ENCODE measurements at regions of chr1 and their contacts with region 1.

Region 1: GRCh38 chr1:53889304-53890298 is at the start of gene YIPF1:
- DNase-seq: peak; percentile 87
- ATAC-seq: peak; percentile 99
- H3K4me3 ChIP-seq: peak within 1 kb of the TSS; percentile 76 to 95 (median 83)
- H3K4me3 Mint-ChIP-seq: peak within 1 kb of the TSS; percentile 96
- H3K27ac ChIP-seq: peak within 1 kb of the TSS; percentile 14 to 71
- H3K27ac Mint-ChIP-seq: peak within 1 kb of the TSS; percentile 79
- H3K4me1 ChIP-seq: peaks cover 19 to 27% of the 10 kb centered on the region in 2 donors
- H3K4me1 Mint-ChIP-seq: peaks cover 44% of the 10 kb centered on the region
- H3K27me3 ChIP-seq: no peaks in the 10 kb centered on the region
- H3K27me3 Mint-ChIP-seq: peaks cover 1% of the 10 kb centered on the region
- CTCF ChIP-seq: no peak
- total RNA-seq, gene YIPF1: 13.9 and 19.3 TPM in 2 replicates

Region 2: GRCh38 chr1:52726265-52727113 is 1163.1 kb before region 1 on chr1 and contains the start of gene ZYG11B:
- CTCF ChIA-PET with region 1: no interaction called
- POLR2A ChIA-PET with region 1: no interaction called
- intact Hi-C with region 1: loop called (anchors 5 kb)
- DNase-seq: peak; percentile 95
- ATAC-seq: peak; percentile 95
- H3K4me3 ChIP-seq: peak within 1 kb of the TSS; percentile 56 to 92 (median 76)
- H3K4me3 Mint-ChIP-seq: peak within 1 kb of the TSS; percentile 95
- H3K27ac ChIP-seq: peak within 1 kb of the TSS in 1 of 2 donors; percentile 66
- H3K27ac Mint-ChIP-seq: peak within 1 kb of the TSS; percentile 88
- H3K4me1 ChIP-seq: peaks cover 8 to 12% of the 10 kb centered on the region in 2 donors
- H3K4me1 Mint-ChIP-seq: peaks cover 35% of the 10 kb centered on the region
- H3K27me3 ChIP-seq: no peaks in the 10 kb centered on the region
- H3K27me3 Mint-ChIP-seq: peaks cover 4% of the 10 kb centered on the region
- CTCF ChIP-seq: no peak
- total RNA-seq, gene ZYG11B: 22.3 and 22.7 TPM in 2 replicates

Region 3: GRCh38 chr1:53837924-53838652 is 51.5 kb before region 1 on chr1 and contains the start of gene NDC1:
- CTCF ChIA-PET with region 1: no interaction called
- POLR2A ChIA-PET with region 1: no interaction called
- intact Hi-C with region 1: loop called (anchors 1 kb)
- DNase-seq: peak; percentile 96
- ATAC-seq: peak; percentile 90
- H3K4me3 ChIP-seq: peak within 1 kb of the TSS; percentile 66 to 95 (median 90)
- H3K4me3 Mint-ChIP-seq: peak within 1 kb of the TSS; percentile 100
- H3K27ac ChIP-seq: peak within 1 kb of the TSS; percentile 91 to 95
- H3K27ac Mint-ChIP-seq: peak within 1 kb of the TSS; percentile 99
- H3K4me1 ChIP-seq: peaks cover 11 to 14% of the 10 kb centered on the region in 2 donors
- H3K4me1 Mint-ChIP-seq: peaks cover 35% of the 10 kb centered on the region
- H3K27me3 ChIP-seq: no peaks in the 10 kb centered on the region
- H3K27me3 Mint-ChIP-seq: no peaks in the 10 kb centered on the region
- CTCF ChIP-seq: no peak
- total RNA-seq, gene NDC1: 12.0 and 15.7 TPM in 2 replicates

Region 4: DNA sequence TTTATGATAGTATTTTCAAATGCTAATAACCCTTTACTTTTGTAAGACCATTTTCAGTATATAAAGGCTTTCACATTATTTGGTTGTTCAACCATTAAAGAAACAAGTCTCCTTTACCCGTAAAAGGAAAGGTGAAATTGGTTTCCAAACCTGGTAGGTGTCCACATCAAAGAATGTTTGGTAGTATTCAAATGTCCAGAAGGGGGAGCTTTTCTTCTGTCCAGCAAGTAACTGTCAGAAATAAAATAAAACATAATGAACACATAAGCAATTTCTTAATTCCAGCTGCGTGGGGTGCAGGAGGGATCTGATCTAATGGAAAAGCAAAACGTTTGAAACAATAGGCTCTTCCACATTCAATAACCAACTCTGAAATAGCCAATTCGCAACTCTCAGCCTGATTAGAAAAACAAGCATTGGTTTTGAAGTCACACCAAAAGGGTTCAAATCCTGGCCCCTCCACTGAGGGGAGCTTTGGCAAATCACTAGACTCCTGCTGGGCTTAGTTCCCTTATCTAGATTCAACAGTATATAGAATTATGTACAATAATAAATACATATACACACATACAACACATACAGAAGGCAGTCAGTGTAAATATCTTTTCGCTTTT is 11.0 kb before region 1 on chr1:
- CTCF ChIA-PET with region 1: interaction called, 14 read pairs
- POLR2A ChIA-PET with region 1: no interaction called
- intact Hi-C with region 1: no loop called
- DNase-seq: peak; percentile 44
- ATAC-seq: no peak
- H3K4me3 ChIP-seq: no peak overlapping the region
- H3K4me3 Mint-ChIP-seq: no peak overlapping the region
- H3K27ac ChIP-seq: no peak overlapping the region
- H3K27ac Mint-ChIP-seq: no peak overlapping the region
- H3K4me1 ChIP-seq: no peaks in the 10 kb centered on the region
- H3K4me1 Mint-ChIP-seq: no peaks in the 10 kb centered on the region
- H3K27me3 ChIP-seq: no peaks in the 10 kb centered on the region
- H3K27me3 Mint-ChIP-seq: no peaks in the 10 kb centered on the region
- CTCF ChIP-seq: peak; percentile 63

Region 5: DNA sequence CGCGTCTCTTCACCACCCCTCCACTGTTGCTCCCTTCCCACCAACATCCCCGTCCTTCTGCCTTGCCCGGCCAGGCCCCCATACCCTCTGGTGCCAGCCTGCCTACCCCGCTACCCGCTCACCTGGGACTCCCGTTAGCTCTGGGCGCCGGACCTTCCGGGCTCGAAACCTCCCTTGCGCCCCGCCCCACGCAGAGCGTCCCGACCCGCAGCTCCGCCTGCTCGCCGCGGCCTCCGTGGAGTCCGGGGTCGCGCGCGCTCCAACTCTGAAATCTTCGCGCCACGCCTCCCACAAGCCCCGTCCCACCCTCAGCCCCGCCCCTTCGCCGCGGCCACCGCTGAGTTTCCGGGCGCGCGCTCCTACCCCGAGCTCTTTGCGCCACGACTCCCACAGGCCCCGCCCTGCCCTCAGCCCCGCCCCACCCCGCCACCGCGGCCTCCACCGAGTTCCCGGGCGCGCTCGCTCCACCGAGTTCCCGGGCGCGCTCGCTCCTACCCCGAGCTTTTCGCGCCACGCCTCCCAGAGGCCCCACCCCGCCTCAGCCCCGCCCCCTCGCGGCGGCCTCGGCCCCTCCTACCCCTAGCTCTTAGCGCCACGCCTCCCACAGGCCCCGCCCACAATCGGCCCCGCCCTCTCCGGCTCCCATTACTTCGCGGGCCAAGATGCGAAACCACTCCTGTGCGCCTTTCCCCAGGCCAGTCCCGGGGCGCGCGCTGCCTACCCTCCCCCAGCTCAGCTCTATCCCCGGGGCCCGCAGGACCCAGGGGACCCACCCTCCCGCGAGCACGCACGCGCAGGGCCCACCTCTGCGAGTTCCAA is 56.0 kb after region 1 on chr1 and contains the start of gene IFT25:
- CTCF ChIA-PET with region 1: interaction called, 6 read pairs
- POLR2A ChIA-PET with region 1: interaction called, 13 read pairs
- intact Hi-C with region 1: loop called (anchors 1 kb)
- DNase-seq: peak; percentile 98
- ATAC-seq: peak; percentile 79
- H3K4me3 ChIP-seq: peak within 1 kb of the TSS; percentile 65 to 95 (median 87)
- H3K4me3 Mint-ChIP-seq: peak within 1 kb of the TSS; percentile 99
- H3K27ac ChIP-seq: peak within 1 kb of the TSS; percentile 65 to 81
- H3K27ac Mint-ChIP-seq: peak within 1 kb of the TSS; percentile 96
- H3K4me1 ChIP-seq: peaks cover 16 to 20% of the 10 kb centered on the region in 2 donors
- H3K4me1 Mint-ChIP-seq: peaks cover 33% of the 10 kb centered on the region
- H3K27me3 ChIP-seq: no peaks in the 10 kb centered on the region
- H3K27me3 Mint-ChIP-seq: no peaks in the 10 kb centered on the region
- CTCF ChIP-seq: no peak
- total RNA-seq, gene IFT25: 45.7 and 48.1 TPM in 2 replicates

Region 6: GRCh38 chr1:54052934-54053744 is 163.5 kb after region 1 on chr1 and contains the starts of genes TCEANC2 and TMEM59:
- CTCF ChIA-PET with region 1: no interaction called
- POLR2A ChIA-PET with region 1: no interaction called
- intact Hi-C with region 1: loop called (anchors 1 kb)
- DNase-seq: peak; percentile 99
- ATAC-seq: peak; percentile 91
- H3K4me3 ChIP-seq: peak within 1 kb of the TSS; percentile 65 to 99 (median 93)
- H3K4me3 Mint-ChIP-seq: no peak within 1 kb of the TSS
- H3K27ac ChIP-seq: peak within 1 kb of the TSS; percentile 75 to 94
- H3K27ac Mint-ChIP-seq: peak within 1 kb of the TSS; percentile 60
- H3K4me1 ChIP-seq: peaks cover 36% of the 10 kb centered on the region in 2 donors
- H3K4me1 Mint-ChIP-seq: peaks cover 36% of the 10 kb centered on the region
- H3K27me3 ChIP-seq: no peaks in the 10 kb centered on the region
- H3K27me3 Mint-ChIP-seq: no peaks in the 10 kb centered on the region
- CTCF ChIP-seq: no peak
- total RNA-seq, gene TCEANC2: 13.5 and 15.9 TPM in 2 replicates
- total RNA-seq, gene TMEM59: 146 and 152 TPM in 2 replicates

Region 7: DNA sequence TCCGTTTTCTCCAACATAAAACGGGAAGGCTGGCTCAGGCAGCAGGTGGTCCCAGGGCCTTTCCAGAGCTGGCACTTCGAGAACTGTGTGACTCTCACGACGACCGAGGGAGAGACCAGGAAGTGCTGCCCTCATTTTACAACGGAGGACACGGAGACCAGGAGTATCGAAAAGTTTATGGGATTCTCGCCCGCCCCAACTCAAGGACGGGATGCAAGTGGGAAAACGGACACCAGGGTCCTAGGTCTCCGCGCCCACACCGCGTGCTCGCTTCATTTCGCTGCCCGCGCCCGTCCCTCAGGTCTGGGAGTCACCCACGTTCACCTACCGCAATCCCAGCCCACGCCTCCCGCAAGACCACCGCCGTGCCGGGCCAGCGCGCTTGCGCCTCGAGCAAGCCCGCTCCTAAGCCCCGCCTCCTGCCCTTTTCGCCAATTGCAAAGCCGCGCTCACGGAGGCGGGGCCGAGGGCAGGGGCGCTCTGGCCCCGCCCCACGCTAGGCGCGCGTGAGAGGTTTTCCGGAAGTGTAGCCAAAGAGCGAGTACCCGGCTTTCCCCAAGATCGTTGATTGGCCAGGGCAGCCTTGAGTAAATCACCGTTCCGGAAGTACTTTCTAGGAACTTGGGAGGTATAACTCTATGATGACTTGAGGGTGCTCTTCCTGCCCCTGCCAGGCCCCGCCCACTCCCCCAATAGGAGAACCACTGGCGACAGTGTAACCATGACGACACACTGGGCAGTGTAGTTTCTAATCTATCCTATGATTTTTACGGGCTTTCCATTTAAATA is 874.7 kb after region 1 on chr1 and contains the start of gene PARS2:
- CTCF ChIA-PET with region 1: no interaction called
- POLR2A ChIA-PET with region 1: no interaction called
- intact Hi-C with region 1: loop called (anchors 5 kb)
- DNase-seq: peak; percentile 99
- ATAC-seq: peak; percentile 92
- H3K4me3 ChIP-seq: peak within 1 kb of the TSS; percentile 75 to 96 (median 91)
- H3K4me3 Mint-ChIP-seq: peak within 1 kb of the TSS; percentile 96
- H3K27ac ChIP-seq: peak within 1 kb of the TSS; percentile 47 to 81
- H3K27ac Mint-ChIP-seq: peak within 1 kb of the TSS; percentile 92
- H3K4me1 ChIP-seq: peaks cover 8 to 10% of the 10 kb centered on the region in 2 donors
- H3K4me1 Mint-ChIP-seq: peaks cover 20% of the 10 kb centered on the region
- H3K27me3 ChIP-seq: no peaks in the 10 kb centered on the region
- H3K27me3 Mint-ChIP-seq: no peaks in the 10 kb centered on the region
- CTCF ChIP-seq: no peak
- total RNA-seq, gene PARS2: 4.5 and 4.9 TPM in 2 replicates

Measured in B cell (primary cell).